Thyroid gland (tissue), 4 donors: ENCODE measurements at regions of chr22 and their contacts with region 1.

Region 1: GRCh38 chr22:36194971-36195370 is 6.6 kb downstream of the APOL4 start:
- DNase-seq: peak; percentile 58 to 61
- H3K4me3 ChIP-seq: no peak overlapping the region
- H3K27ac ChIP-seq: no peak overlapping the region
- H3K4me1 ChIP-seq: peaks cover 0 to 15% of the 10 kb centered on the region in 2 donors
- H3K27me3 ChIP-seq: no peaks in the 10 kb centered on the region
- CTCF ChIP-seq: peak; percentile 48 to 67 (median 58)
- POLR2A ChIP-seq: no peak

Region 2: DNA sequence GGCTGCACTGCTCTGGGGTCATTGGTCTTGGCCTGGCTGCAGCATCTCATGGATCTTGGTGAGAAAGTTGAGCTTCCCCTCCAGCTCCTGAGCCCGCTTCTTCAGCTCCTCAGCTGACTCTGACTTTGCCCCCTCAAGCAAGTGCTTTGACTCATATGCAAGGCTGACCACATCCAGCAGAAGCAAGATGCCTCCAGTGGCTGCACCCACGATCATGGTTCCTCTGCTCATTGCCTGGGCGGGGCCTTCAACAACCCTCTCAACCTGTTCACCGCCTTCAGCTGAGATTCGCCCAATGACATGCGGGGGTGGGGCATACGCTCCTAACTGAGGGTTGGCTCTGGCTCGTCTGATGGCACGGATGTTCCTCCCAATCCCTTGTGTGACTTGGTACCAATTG is 32.4 kb after region 1 on chr22:
- intact Hi-C with region 1: loop called (anchors 5 kb)
- DNase-seq: no peak
- H3K4me3 ChIP-seq: no peak overlapping the region
- H3K27ac ChIP-seq: no peak overlapping the region
- H3K4me1 ChIP-seq: no peaks in the 10 kb centered on the region
- H3K27me3 ChIP-seq: no peaks in the 10 kb centered on the region
- CTCF ChIP-seq: no peak
- POLR2A ChIP-seq: no peak

Region 3: DNA sequence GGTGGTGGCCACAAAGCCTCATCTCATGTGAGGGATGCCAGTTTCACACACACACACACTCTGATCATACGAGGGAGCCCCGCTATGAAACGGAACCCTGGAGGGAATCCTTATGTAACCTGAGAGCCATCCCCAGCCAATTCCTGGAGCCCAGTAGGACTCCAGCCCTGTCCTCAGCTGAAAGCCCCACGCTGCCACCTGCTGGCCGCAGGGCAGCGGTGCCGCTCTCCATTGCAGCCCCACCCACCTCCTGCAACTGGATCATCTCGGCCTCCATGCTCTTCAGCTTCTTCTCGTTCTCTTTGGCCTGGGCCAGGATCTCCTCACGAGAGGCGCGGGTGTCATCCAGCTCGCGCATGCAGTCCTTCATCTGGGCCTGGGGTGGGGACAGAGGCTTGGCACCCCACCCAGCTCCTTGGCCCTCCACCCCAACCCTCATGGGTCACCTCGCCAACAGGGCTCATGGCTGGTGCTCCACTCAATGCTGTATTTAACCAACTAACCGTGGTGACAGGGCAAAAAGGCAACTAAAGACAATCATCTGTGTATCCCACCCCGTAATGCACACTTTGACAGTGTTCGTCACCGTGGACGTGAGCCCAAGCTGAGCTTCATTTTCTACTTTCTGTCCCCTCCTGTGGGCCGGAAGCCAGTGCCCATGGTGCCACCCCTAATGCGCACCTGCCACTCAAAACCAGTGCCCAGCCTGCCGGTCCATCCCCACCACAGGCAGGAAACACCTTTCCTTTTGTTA is 91.7 kb after region 1 on chr22:
- intact Hi-C with region 1: loop called (anchors 10 kb)
- DNase-seq: peak; percentile 50 to 67
- H3K4me3 ChIP-seq: no peak overlapping the region
- H3K27ac ChIP-seq: peak overlapping the region in 2 of 3 donors; percentile 12 to 27
- H3K4me1 ChIP-seq: no peaks in the 10 kb centered on the region
- H3K27me3 ChIP-seq: no peaks in the 10 kb centered on the region
- CTCF ChIP-seq: peak; percentile 48 to 88 (median 70)
- POLR2A ChIP-seq: no peak